ENCODE measurements at regions of chr2 and their contacts with region 1.

Region 1: GRCh38 chr2:1544478-1545069 is 131.3 kb downstream of the TPO start:
- DNase-seq: no peak
- H3K4me3 Mint-ChIP-seq: no peak overlapping the region
- H3K27ac Mint-ChIP-seq: no peak overlapping the region
- H3K4me1 Mint-ChIP-seq: peaks cover 6% of the 10 kb centered on the region
- H3K27me3 Mint-ChIP-seq: no peaks in the 10 kb centered on the region

Region 2: DNA sequence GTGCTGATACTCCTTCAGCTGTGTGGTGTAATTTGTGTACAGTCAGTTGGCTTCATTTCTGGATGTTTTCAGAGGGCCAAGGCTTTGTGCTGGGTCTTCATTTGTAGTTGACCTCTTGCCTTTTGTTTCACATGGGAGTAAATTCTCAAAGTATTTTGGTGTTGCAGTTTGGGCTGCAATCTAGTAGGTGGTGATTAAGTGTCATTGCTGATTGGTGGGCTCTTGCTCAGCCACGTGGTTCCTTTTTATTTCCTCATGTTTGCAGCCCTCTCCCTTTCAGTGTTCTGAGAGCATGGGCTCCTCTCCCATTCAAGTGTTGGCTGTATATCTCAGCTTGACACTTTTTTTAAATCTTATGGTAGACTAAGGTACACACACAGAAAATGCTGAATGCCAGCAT is 497.1 kb before region 1 on chr2:
- CTCF ChIA-PET with region 1: no interaction called
- POLR2A ChIA-PET with region 1: no interaction called
- intact Hi-C with region 1: loop called (anchors 5 kb)
- DNase-seq: no peak
- H3K4me3 Mint-ChIP-seq: no peak overlapping the region
- H3K27ac Mint-ChIP-seq: no peak overlapping the region
- H3K4me1 Mint-ChIP-seq: peaks cover 4% of the 10 kb centered on the region
- H3K27me3 Mint-ChIP-seq: peaks cover 12% of the 10 kb centered on the region

Region 3: DNA sequence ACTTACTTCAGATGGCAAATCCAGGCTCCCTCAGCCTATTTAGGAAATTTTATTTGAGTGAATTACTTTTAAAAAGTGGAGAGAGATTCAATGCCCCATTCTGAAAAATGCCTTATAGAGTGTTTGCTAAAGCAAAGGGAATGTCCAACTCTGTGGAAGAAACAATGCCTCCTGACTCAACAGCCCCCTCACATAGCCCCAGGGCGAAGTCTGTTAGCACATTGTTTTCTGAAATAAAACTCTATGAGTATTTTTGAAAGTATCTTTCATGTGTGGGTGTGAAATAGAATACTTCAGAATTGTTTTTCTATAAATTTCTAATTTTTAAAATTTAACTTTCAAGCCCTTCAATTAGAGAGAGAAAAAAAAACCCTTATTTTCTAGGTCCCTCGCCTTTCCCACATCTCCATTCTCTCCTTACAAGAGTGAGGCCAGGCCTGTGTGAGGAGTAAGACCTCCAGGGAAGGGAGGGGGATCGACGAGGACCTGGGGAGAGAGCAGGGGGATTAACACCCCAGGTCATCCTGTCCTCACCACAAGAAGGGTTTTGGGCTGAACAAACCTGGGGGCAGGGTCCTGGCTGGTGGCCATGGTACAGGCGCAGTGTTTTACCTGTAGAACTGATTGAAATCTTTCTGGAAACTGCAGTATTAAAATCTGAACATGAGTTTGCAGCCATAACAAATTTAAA is 452.5 kb before region 1 on chr2:
- CTCF ChIA-PET with region 1: no interaction called
- POLR2A ChIA-PET with region 1: no interaction called
- intact Hi-C with region 1: no loop called
- DNase-seq: no peak
- H3K4me3 Mint-ChIP-seq: no peak overlapping the region
- H3K27ac Mint-ChIP-seq: no peak overlapping the region
- H3K4me1 Mint-ChIP-seq: no peaks in the 10 kb centered on the region
- H3K27me3 Mint-ChIP-seq: no peaks in the 10 kb centered on the region

Region 4: DNA sequence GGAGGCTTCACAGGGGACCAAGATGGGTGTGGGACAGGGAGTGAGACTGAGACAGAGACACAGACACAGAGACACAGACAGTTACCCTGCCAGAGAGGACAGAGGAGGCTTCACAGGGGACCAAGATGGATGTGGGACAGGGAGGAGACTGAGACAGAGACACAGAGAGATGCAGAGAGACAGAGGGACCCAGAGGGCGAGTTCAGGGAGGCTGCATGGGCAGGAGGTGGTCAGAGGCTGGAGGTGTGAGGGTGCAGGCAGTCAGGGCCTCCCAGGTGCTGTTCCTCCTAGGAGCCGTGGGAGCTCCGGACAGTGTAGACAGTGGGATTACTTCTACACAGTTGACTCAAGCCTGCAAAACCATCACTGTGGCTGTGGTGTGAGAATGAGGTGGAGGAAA is 405.9 kb after region 1 on chr2:
- CTCF ChIA-PET with region 1: no interaction called
- POLR2A ChIA-PET with region 1: no interaction called
- intact Hi-C with region 1: no loop called
- DNase-seq: no peak
- H3K4me3 Mint-ChIP-seq: no peak overlapping the region
- H3K27ac Mint-ChIP-seq: no peak overlapping the region
- H3K4me1 Mint-ChIP-seq: no peaks in the 10 kb centered on the region
- H3K27me3 Mint-ChIP-seq: peaks cover 10% of the 10 kb centered on the region